ENCODE measurements at regions of chr6 and their contacts with region 1.

Region 1: GRCh38 chr6:35681298-35681697 is 7.4 kb downstream of the FKBP5 start:
- DNase-seq: no peak
- ATAC-seq: no peak
- H3K4me3 ChIP-seq: peak overlapping the region; percentile 15
- H3K27ac ChIP-seq: peak overlapping the region; percentile 46
- H3K4me1 ChIP-seq: peaks cover 79% of the 10 kb centered on the region
- H3K27me3 ChIP-seq: no peaks in the 10 kb centered on the region
- CTCF ChIP-seq: no peak

Region 2: GRCh38 chr6:35120746-35121145 is 560.6 kb before region 1 on chr6:
- intact Hi-C with region 1: no loop called
- DNase-seq: no peak
- ATAC-seq: no peak
- H3K4me3 ChIP-seq: no peak overlapping the region
- H3K27ac ChIP-seq: no peak overlapping the region
- H3K4me1 ChIP-seq: no peaks in the 10 kb centered on the region
- H3K27me3 ChIP-seq: no peaks in the 10 kb centered on the region
- CTCF ChIP-seq: no peak

Region 3: GRCh38 chr6:35640017-35640664 is 41.2 kb before region 1 on chr6:
- intact Hi-C with region 1: loop called in 1 of 2 experiments (anchors 5 kb)
- DNase-seq: no peak
- ATAC-seq: peak in 2 of 4 donors; percentile 14 to 25
- H3K4me3 ChIP-seq: no peak overlapping the region
- H3K27ac ChIP-seq: no peak overlapping the region
- H3K4me1 ChIP-seq: peaks cover 62% of the 10 kb centered on the region
- H3K27me3 ChIP-seq: no peaks in the 10 kb centered on the region
- CTCF ChIP-seq: no peak

Region 4: DNA sequence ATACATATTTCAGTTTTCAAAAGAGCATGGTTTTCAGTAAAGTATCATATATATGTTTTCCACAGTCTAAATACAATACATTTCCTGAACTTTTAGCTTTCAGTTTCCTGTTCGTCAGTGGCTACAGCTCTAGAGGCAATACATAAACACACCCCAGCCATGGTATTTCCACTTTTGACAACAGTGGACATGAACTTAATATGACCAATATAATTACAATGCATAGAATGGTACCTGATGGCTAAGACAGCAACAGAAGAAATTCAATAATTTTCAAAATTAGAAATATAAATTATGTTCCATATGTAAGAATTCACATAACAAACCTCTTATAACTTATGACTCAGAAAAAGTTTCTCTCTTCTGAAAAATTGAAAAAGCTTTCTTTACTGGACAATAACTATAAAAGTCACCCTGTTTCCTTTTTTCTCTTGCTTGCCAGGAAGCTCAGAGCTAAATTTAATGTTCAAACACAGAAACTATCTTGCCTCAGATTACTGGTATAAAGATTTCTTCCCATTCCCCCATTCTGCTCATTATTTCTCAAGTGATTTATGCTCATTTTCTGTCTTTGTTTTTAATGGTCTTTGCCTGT is 11.8 kb before region 1 on chr6:
- intact Hi-C with region 1: no loop called
- DNase-seq: no peak
- ATAC-seq: no peak
- H3K4me3 ChIP-seq: peak overlapping the region; percentile 8
- H3K27ac ChIP-seq: peak overlapping the region; percentile 73
- H3K4me1 ChIP-seq: peaks cover 68% of the 10 kb centered on the region
- H3K27me3 ChIP-seq: no peaks in the 10 kb centered on the region
- CTCF ChIP-seq: no peak

Region 5: DNA sequence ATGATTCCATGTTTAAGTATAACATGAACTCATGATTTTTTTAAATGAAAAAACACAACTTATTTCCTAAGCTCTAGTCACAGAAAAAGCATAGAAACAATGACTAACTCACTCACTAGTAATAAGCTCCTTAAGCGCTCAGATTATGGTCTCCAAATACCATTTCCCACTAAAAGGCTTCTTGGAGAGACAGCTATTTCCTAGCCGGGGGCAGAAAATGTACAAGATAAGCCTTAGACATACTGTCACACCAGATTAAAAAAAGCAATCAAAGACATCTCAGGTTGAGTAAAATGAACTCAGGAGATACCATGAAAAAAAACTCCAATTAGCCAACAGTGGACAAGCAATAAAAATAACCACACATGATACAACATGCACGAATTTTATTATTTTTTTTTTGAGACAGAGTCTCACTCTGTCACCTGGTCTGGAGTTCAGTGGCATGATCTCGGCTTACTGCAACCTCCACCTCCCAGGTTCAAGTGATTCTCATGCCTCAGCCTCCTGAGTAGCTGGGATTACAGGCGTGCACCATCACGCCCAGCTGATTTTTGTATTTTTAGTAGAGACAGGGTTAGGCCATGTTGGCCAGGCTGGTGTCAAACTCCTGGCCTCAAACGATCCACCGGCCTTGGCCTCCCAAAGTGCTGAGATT is 224.7 kb after region 1 on chr6:
- intact Hi-C with region 1: no loop called
- DNase-seq: no peak
- ATAC-seq: no peak
- H3K4me3 ChIP-seq: no peak overlapping the region
- H3K27ac ChIP-seq: no peak overlapping the region
- H3K4me1 ChIP-seq: no peaks in the 10 kb centered on the region
- H3K27me3 ChIP-seq: no peaks in the 10 kb centered on the region
- CTCF ChIP-seq: no peak

Measured in psoas muscle (tissue), 8 donors.